AG04449 (cell line): ENCODE measurements at regions of chr3 and their contacts with region 1.

Region 1: DNA sequence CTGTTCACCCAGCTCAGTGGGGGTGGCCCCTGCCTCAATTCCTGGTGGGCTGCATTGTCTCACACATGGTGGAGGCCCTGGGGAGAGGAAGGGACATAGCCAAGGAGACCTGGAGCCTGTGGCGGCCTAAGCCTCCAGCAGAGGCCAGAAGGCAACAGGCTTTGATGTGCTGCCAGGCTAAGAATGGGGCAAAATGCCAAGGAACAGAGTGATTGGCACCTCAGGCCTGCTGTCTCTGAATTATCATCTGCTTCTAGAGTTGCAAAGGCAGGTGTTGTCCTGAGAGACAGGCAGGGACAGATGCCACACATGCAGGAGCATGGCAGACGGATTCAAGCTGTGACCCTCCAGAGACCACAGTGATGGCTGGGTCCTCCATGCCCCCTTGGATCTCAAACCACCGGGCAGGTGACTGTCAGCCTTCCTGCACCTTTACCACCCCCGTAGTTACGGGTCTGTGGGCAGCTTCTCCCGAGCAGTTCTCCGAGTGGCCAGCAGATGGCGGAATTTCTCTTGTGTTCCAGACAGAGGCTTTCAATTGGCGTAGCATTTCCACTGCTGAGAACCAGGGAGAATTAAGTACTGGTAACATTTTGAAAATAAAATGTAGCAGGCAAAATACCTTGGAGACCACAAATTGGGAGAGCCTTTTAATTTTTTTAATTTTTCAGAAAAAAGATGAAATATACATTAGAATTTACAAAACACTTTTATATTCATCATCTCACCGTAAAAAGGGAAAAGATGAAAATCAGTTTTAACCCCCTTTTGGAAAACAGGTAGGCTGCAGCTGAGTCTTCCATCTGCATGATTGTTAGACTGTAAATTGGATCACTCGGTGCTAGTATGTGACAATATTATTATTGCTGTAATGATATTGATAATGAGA is 525.5 kb upstream of the CFAP20DC start:
- DNase-seq: no peak
- H3K4me3 ChIP-seq: no peak overlapping the region
- CTCF ChIP-seq: peak; percentile 85

Region 2: GRCh38 chr3:59212128-59212779 is 363.1 kb before region 1 on chr3:
- CTCF ChIA-PET with region 1: interaction called, 14 read pairs
- POLR2A ChIA-PET with region 1: no interaction called
- DNase-seq: peak; percentile 7
- H3K4me3 ChIP-seq: no peak overlapping the region
- CTCF ChIP-seq: peak; percentile 55

Region 3: GRCh38 chr3:59559721-59560435 is 15.5 kb before region 1 on chr3:
- CTCF ChIA-PET with region 1: interaction called, 20 read pairs
- POLR2A ChIA-PET with region 1: no interaction called
- DNase-seq: peak; percentile 82
- H3K4me3 ChIP-seq: no peak overlapping the region
- CTCF ChIP-seq: no peak

Region 4: GRCh38 chr3:59595830-59596229 is 20.5 kb after region 1 on chr3:
- CTCF ChIA-PET with region 1: interaction called, 59 read pairs
- POLR2A ChIA-PET with region 1: no interaction called
- DNase-seq: no peak
- H3K4me3 ChIP-seq: no peak overlapping the region
- CTCF ChIP-seq: no peak

Region 5: DNA sequence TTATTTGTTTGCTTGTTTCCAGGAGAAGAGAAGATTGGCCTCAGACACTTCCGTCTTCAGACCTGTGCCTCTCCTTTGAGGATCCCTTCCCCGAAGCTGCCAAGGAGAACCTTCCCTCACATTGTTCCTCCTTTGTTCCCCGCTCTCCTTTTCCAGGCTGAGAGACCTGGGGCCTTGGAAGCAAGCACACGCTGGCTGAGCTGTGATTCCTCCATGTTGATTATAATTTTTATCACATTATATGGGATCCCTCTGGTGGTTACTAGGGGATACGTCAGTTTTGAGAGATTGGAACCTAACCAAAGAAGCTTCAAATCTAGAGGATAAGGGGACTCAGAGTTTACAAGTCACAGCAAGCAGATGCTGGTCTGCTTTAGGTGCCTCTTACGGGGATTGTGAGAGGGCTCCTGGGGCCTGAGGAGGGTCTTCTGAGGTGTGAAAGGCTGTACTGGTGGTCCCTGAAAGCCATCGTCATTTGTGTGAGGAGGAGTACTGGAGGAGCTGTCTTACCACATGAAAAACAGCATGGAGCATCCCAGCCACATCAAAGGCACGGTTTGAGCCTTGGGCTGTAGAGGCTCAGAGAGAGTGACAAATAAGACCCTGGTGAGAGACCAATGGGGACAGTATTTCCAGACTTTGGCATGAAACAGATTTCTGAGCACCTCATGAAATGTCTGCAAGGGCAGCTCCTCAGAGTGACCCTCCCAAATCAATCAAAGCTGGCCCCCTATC is 234.5 kb after region 1 on chr3:
- CTCF ChIA-PET with region 1: interaction called, 39 read pairs
- POLR2A ChIA-PET with region 1: no interaction called
- DNase-seq: no peak
- H3K4me3 ChIP-seq: no peak overlapping the region
- CTCF ChIP-seq: peak; percentile 17

Region 6: DNA sequence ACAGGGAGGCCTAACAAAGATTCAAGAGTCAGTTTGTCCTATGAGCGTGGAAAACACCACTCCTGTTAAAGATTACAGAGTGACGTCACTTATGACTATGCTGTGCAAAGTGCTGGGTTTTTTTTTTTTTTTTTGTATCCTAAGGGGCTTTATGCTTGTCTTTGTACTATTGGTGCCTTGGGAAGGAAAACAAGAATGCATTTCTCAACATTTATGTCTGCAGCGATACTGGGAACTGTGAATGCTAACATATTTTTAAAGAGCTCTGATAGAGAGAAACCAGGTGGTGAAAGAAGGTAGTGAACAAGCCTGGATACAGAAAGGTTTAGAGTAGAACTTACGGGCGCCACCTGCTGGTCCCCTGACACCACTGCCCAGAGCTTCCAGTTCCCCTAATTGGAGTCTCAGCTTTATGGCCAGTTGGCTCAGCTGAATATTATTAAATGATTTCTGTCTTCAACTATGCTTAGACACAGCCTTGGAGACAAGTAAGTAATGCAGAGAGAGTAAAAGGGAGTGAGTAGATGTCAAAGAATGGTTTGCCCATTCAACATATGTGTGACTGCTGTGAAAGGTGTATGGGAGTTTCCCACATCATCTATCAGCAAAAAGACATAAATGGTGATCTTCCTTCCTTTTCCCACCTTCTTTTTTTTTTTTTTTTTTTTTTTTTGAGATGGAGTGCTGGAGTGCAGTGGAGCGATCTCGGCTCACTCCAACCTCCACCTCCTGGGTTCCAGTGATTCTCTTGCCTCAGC is 282.4 kb after region 1 on chr3:
- CTCF ChIA-PET with region 1: interaction called, 182 read pairs
- POLR2A ChIA-PET with region 1: no interaction called
- DNase-seq: peak; percentile 38
- H3K4me3 ChIP-seq: no peak overlapping the region
- CTCF ChIP-seq: peak; percentile 91